ENCODE measurements at regions of chr9 and their contacts with region 1.

Region 1: GRCh38 chr9:32264170-32264862 is 120.1 kb upstream of the ACO1 start:
- DNase-seq: no peak

Region 2: DNA sequence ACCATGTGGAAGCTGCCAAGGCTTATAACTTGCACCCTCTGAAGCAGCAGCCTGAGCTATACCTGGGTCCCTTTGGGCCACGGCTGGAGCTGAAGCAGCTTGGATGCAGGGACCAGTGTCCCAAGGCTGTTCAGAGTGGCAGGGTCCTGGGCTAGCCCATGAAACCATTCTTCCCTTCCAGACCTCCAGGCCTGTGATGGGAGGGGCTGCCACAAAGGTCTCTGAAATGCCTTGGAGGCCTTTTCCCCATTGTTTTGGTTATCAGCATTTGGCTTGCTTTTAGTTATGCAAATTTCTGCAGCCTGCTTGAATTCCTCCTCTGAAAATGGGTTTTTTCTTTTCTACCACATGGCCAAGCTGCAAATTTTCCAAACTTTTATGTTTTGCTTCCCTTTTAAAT is 313.6 kb before region 1 on chr9:
- intact Hi-C with region 1: no loop called
- DNase-seq: no peak

Region 3: GRCh38 chr9:32326146-32326545 is 61.8 kb after region 1 on chr9:
- intact Hi-C with region 1: loop called (anchors 10 kb)
- DNase-seq: no peak

Measured in posterior cingulate gyrus (tissue), 11 donors.